ENCODE measurements at regions of chr5 and their contacts with region 1.

Region 1: GRCh38 chr5:35830587-35830986 is 26.1 kb upstream of the IL7R start:
- DNase-seq: no peak
- H3K4me3 Mint-ChIP-seq: peak overlapping the region; percentile 43
- H3K27ac Mint-ChIP-seq: peak overlapping the region; percentile 82
- H3K4me1 Mint-ChIP-seq: peaks cover 86% of the 10 kb centered on the region
- H3K27me3 Mint-ChIP-seq: no peaks in the 10 kb centered on the region

Region 2: GRCh38 chr5:35672995-35673394 is 157.6 kb before region 1 on chr5:
- intact Hi-C with region 1: loop called (anchors 5 kb)
- DNase-seq: peak; percentile 29
- H3K4me3 Mint-ChIP-seq: peak overlapping the region; percentile 10
- H3K27ac Mint-ChIP-seq: peak overlapping the region; percentile 59
- H3K4me1 Mint-ChIP-seq: peaks cover 65% of the 10 kb centered on the region
- H3K27me3 Mint-ChIP-seq: no peaks in the 10 kb centered on the region

Region 3: DNA sequence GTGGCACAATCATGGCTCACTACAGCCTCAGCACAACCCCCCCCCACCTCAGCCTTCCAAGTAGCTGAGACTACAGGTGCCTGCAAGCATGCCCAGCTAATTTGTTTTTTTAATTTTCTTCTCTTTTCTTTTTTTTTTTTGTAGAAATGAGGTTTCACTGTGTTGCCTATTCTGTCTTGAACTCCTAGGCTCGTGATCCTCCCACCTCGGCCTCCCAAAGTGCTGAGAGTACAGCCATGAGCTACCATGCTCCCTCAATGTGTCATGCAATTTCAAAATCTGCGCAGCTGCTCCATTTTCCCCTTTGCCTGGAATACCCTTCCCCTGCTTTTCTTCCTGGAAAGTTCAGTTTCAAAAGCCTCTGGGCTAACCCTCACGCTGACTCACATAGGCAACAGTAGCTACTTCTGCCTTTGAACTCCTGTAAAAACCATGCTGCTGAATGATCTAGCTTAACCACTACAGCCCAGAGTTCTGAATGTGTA is 44.9 kb before region 1 on chr5:
- intact Hi-C with region 1: loop called (anchors 2 kb)
- DNase-seq: peak; percentile 30
- H3K4me3 Mint-ChIP-seq: peak overlapping the region; percentile 24
- H3K27ac Mint-ChIP-seq: peak overlapping the region; percentile 86
- H3K4me1 Mint-ChIP-seq: peaks cover 90% of the 10 kb centered on the region
- H3K27me3 Mint-ChIP-seq: no peaks in the 10 kb centered on the region

Region 4: GRCh38 chr5:35811108-35811741 is 19.4 kb before region 1 on chr5:
- intact Hi-C with region 1: loop called (anchors 1 kb)
- DNase-seq: no peak
- H3K4me3 Mint-ChIP-seq: peak overlapping the region; percentile 70
- H3K27ac Mint-ChIP-seq: peak overlapping the region; percentile 98
- H3K4me1 Mint-ChIP-seq: peaks cover 56% of the 10 kb centered on the region
- H3K27me3 Mint-ChIP-seq: no peaks in the 10 kb centered on the region

Region 5: GRCh38 chr5:35819668-35820067 is 10.9 kb before region 1 on chr5:
- intact Hi-C with region 1: loop called (anchors 1 kb)
- DNase-seq: no peak
- H3K4me3 Mint-ChIP-seq: no peak overlapping the region
- H3K27ac Mint-ChIP-seq: peak overlapping the region; percentile 4
- H3K4me1 Mint-ChIP-seq: peaks cover 60% of the 10 kb centered on the region
- H3K27me3 Mint-ChIP-seq: no peaks in the 10 kb centered on the region

Region 6: GRCh38 chr5:35919191-35919590 is 88.6 kb after region 1 on chr5:
- intact Hi-C with region 1: loop called (anchors 1 kb)
- DNase-seq: no peak
- H3K4me3 Mint-ChIP-seq: no peak overlapping the region
- H3K27ac Mint-ChIP-seq: peak overlapping the region; percentile 81
- H3K4me1 Mint-ChIP-seq: peaks cover 35% of the 10 kb centered on the region
- H3K27me3 Mint-ChIP-seq: peaks cover 3% of the 10 kb centered on the region

Region 7: DNA sequence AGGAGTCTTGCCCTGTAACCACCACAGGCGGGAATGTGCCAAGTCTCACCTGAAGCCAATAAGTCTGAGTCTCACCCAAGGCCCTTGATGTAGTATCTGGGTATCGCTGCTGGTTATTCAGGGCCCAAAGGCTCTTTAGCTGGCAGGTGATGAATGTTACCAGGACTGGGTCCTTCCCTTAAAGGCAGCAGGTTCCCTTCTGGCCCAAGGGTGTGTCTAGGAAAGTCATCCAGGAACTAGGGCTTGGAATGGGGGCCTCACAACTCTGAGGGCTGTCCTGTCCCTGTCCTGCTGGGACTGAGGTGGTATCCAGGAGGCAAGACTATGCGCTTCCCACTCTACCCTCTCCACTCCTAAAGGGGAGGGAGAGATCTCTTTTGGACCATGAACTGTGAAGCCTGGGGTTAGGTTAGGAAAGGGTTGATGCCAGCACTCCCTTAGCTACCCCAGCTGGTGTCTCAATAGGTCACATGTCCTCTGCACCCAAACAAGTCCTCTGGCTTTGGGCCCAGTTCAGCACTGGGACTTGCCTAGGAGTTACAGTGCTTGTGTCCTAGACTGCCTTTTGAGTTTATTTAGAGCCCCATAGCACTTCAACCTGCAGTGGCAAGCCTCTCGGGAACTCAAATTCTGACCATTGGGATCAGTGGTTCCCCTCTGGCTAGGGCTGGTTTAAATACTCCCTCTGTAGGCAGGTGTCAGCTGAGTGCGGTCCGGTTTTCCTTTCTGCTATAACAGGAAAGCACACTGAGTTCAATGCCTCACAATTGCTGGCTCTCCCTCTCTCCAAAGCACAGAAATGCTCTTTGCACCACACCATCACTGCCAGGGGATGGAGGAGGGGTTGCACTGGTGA is 493.6 kb after region 1 on chr5:
- intact Hi-C with region 1: no loop called
- DNase-seq: no peak
- H3K4me3 Mint-ChIP-seq: no peak overlapping the region
- H3K27ac Mint-ChIP-seq: no peak overlapping the region
- H3K4me1 Mint-ChIP-seq: no peaks in the 10 kb centered on the region
- H3K27me3 Mint-ChIP-seq: peaks cover 9% of the 10 kb centered on the region

Measured in activated T-helper 1 cell treated with anti-CD3 and anti-CD28 coated beads, Interleukin-12 subunit alpha, Interleukin-12 subunit beta, Interleukin-2, Interleukin-4 antibody, amounts not matched to agents 30 ng/mL and 10 ng/mL and 1 ng/mL, durations not matched to agents 14 hours and 24 hours and 36 hours (primary cell).